HEK293T (cell line): ENCODE measurements at regions of chr6 and their contacts with region 1.

Region 1: DNA sequence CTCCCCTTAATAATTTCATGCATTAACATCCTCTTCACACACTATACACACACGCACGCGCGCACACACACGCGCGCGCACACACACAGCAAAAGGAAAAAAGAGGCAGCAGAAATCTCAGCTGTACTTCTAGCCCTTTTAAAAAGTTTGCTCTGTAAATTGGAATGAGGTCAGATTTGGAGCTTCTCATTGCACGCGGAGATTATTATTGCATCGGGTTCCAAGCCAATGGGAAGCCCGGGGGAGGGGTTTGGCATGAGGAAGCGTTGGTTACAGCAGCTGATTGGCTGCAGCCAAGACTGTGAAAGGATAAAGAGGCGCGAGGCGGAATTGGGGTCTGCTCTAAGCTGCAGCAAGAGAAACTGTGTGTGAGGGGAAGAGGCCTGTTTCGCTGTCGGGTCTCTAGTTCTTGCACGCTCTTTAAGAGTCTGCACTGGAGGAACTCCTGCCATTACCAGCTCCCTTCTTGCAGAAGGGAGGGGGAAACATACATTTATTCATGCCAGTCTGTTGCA is at the start of gene SOX4:
- DNase-seq: peak; percentile 87

Region 2: DNA sequence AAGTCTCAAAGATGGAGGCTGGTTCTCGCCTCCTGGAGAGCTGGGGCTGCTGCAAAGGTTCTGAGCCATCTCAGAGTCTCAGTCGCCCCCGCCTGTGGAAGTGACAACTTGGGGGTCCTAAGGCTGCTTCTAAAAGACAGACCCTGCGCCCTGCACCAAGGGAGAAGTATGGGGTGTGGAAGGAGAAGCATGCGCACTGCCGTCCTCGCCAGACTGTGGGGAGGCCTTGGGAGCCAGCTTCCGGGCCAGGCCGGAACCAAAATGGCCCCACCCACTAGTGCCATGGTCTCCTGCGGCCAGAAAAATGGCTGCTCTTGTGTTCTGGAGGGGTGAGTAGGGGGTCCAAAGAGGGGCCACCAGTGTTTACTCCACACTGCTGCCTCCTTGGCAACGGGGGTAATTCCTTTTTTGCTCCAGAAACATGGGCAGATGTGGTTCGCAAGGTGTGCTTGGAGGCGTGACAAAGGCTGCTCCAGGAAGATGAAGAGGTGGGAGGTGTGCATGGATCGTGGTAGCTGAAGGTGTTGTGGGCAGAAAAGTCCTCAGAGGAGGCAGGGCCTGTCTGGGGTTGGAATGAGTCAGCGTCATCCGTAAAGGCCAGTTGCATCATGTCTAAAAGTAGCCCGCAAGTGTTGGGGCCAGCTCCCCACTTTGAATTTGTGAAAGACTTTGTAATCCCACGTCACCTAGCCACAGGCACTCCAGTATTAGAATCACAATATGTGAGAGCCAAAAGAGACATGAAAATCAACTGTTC is 329.8 kb before region 1 on chr6:
- CTCF ChIA-PET with region 1: no interaction called
- POLR2A ChIA-PET with region 1: interaction called, 20 read pairs
- DNase-seq: peak; percentile 55

Region 3: DNA sequence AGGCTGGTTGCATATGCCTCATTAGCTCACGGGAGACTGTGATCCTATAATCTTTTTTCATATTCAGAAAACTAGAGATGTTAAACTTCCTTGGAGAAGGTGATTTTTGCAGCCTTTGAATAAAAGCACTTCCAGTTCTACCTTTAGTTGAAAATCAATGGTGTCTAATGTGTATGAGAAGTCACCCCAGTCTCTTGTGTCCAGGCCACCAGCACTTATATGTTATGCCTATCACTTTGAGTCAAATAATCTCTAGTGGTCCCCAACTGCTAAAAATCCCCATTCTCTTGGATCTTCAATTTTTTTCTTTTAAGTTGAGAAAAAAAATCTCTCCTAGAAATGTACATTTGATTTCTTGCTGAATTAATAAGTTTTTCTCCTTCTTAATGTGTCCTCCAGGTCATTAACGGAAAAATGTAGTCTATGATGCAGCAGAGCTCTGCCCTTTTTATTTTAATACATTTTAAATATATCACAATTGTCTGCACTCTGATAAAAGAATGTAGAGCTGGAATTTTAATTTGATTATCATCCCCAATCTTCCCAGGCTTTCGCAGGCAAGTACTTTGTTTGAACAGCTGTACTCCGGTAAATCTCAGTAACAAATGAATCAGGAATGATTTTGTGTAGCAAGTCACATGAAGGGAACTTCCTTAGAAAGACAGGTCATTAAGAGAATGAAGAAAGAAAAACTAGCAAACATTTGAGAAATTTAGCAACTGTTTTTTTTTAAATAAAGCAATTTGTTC is 147.1 kb after region 1 on chr6:
- CTCF ChIA-PET with region 1: interaction called, 3 read pairs
- POLR2A ChIA-PET with region 1: interaction called, 10 read pairs
- DNase-seq: no peak

Region 4: GRCh38 chr6:21769405-21769861 is 176.0 kb after region 1 on chr6:
- CTCF ChIA-PET with region 1: no interaction called
- POLR2A ChIA-PET with region 1: interaction called, 13 read pairs
- DNase-seq: no peak

Region 5: DNA sequence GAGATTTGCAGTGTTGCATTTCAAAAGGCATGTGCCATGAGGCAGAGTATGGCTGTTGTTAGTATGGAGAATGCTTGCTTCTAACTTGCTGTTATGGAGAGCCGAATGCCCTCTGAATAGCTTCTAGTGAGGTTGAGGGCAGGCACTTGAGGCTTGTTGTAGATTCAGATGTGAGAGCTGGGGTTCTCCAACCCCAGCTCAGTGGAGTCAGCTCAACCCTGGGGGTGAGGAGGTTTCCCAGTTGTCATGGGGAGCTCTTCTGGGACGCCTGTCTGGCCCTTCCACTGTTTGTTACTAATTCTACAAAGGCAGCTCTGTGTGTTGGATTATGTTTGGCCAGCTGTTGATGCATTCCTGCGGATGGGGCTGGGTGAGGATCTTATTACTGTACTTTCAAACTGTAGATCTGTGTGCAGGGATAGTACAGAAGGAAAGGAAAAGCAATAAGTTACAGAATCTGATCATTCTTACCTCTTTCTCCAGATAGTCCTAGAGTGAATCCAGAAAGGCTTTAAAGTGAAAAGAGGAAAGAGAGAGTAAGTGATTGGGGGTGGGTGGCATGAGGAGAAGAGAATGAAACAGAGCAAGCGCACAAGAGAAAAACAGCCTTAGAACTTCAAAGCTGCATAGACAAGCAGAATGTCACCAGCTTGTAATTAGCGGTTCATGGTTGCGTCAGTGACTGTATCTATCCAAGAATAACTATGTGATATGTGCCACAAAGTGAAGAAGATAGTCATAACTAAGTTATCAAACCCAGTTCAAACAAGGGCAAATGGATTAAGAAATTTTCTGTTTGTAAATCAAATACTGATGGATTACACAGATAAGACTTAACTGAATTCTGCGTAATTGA is 554.7 kb after region 1 on chr6:
- CTCF ChIA-PET with region 1: no interaction called
- POLR2A ChIA-PET with region 1: interaction called, 11 read pairs
- DNase-seq: peak; percentile 20